Thyroid gland (tissue), 4 donors: ENCODE measurements at regions of chr1 and their contacts with region 1.

Region 1: GRCh38 chr1:167066333-167067122 is 23.6 kb downstream of the GPA33 start:
- DNase-seq: peak; percentile 66 to 76
- H3K4me3 ChIP-seq: no peak overlapping the region
- H3K27ac ChIP-seq: no peak overlapping the region
- H3K4me1 ChIP-seq: no peaks in the 10 kb centered on the region
- H3K27me3 ChIP-seq: no peaks in the 10 kb centered on the region
- CTCF ChIP-seq: peak; percentile 82 to 97 (median 91)
- POLR2A ChIP-seq: no peak

Region 2: GRCh38 chr1:167121375-167122120 is 55.0 kb after region 1 on chr1:
- intact Hi-C with region 1: no loop called
- DNase-seq: peak; percentile 42 to 52
- H3K4me3 ChIP-seq: peak overlapping the region in 2 of 3 donors; percentile 3 to 26
- H3K27ac ChIP-seq: no peak overlapping the region
- H3K4me1 ChIP-seq: peaks cover 0 to 9% of the 10 kb centered on the region in 2 donors
- H3K27me3 ChIP-seq: no peaks in the 10 kb centered on the region
- CTCF ChIP-seq: no peak
- POLR2A ChIP-seq: no peak

Region 3: DNA sequence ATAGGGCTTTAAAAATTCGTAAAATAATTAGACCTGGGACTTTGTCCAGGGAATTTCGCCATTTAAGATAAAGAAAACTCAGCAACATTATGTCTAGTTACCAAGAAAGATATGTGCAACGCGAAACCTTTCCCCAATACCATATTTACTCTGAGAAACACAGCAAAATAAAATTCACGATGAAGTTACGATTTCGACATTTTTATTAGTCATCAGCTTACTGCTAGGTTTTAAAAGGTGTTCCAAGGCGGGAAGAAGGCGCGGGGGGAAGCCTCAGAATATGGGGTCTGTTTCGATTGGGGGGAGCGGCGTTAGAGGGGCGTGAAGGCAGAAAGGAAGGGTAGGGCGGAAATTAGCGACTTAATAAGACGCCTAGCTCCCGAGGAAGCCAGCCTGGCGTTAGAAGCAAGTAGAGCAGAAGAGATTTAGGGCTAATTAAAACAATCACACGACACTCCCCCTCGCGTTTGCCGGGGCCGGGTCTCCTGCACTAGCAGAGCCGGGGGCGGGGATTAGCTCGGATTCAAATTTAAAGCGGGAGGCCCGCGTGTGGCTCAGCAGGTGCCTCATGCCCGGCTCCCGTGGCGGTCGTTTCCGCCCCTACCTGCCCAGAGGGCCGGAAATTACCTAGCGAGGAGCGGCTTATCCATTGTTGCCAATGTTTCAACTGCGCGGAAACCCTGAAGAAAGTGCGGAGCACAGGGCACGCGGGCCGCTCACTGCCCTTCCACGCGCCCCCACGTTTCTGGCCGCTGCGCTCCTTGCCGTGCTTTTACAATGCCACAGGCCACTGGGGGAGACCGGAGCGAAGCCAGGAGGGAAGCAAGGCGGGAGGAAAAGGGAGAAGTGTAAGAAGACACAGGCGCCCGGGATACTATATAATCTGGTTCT is 153.4 kb after region 1 on chr1:
- intact Hi-C with region 1: loop called (anchors 10 kb)
- DNase-seq: peak; percentile 88 to 91
- H3K4me3 ChIP-seq: peak overlapping the region; percentile 42 to 63 (median 53)
- H3K27ac ChIP-seq: peak overlapping the region; percentile 52 to 67 (median 64)
- H3K4me1 ChIP-seq: peaks cover 0 to 16% of the 10 kb centered on the region in 2 donors
- H3K27me3 ChIP-seq: no peaks in the 10 kb centered on the region
- CTCF ChIP-seq: peak in 1 of 6 experiments; percentile 22
- POLR2A ChIP-seq: peak in 1 of 2 donors; percentile 34

Region 4: DNA sequence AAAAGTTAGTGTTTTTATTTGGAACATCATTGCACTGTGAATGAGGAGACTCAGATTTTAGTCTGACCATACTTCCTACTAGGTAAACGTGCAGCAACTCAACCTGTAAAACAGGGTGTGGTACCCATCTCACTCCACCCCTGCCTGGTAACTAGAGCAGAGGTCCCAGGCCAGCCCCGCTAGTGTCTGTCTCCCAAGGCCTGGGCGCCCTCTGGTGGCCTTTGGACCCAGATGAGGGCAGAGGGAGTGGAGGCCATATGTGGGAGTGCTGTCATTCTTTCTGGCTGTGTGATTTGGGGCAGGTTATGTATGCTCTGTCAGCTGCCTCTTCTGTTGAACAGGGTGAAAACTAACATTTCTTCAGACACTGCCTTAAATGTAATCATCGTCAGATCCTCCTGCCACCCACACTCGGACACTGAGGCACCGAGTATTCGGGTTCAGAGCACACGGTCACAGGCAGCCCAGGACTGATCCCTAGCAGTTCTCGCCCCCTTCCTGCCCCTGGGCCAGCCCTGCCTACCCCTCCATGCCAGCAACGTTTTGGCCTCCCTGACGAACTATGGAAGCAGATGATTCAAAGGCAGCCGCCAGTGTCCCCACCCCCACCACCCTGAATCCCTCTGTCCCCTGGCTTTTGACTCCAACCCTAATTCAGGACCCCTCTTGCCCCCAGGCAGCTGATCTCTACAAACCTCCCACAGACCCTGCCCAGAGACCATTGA is 375.8 kb after region 1 on chr1:
- intact Hi-C with region 1: loop called (anchors 5 kb)
- DNase-seq: peak; percentile 81 to 87
- H3K4me3 ChIP-seq: no peak overlapping the region
- H3K27ac ChIP-seq: no peak overlapping the region
- H3K4me1 ChIP-seq: peaks cover 3 to 6% of the 10 kb centered on the region in 2 donors
- H3K27me3 ChIP-seq: no peaks in the 10 kb centered on the region
- CTCF ChIP-seq: peak; percentile 54 to 85 (median 76)
- POLR2A ChIP-seq: no peak

Region 5: DNA sequence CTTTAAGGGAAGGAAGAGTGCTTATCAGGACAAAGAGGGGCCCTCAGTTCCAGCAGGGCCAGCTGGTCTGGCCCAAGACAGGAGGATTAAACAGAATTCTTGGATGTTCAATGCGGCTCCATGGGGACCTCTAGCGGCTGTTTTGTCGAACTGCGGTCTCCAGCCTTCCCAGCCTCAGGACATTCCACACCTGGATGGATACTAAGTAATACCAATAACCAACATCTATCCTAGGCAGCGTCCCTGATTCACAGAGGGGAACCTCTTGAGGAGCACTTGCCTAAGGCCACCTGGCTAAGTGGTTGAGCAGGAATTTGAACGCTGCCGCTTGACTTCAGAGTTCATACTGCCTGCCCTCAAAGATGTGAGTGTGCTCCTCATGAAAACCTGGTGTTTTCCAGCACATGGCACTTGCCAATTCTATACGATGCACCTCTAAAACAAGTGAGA is 467.3 kb after region 1 on chr1:
- intact Hi-C with region 1: loop called (anchors 10 kb)
- DNase-seq: peak; percentile 77 to 82
- H3K4me3 ChIP-seq: no peak overlapping the region
- H3K27ac ChIP-seq: no peak overlapping the region
- H3K4me1 ChIP-seq: no peaks in the 10 kb centered on the region
- H3K27me3 ChIP-seq: no peaks in the 10 kb centered on the region
- CTCF ChIP-seq: peak; percentile 69 to 90 (median 82)
- POLR2A ChIP-seq: no peak

Region 6: GRCh38 chr1:167555971-167556714 is 489.6 kb after region 1 on chr1:
- intact Hi-C with region 1: loop called (anchors 5 kb)
- DNase-seq: peak; percentile 87 to 88
- H3K4me3 ChIP-seq: no peak overlapping the region
- H3K27ac ChIP-seq: peak overlapping the region in 2 of 3 donors; percentile 3 to 56
- H3K4me1 ChIP-seq: peaks cover 18 to 31% of the 10 kb centered on the region in 2 donors
- H3K27me3 ChIP-seq: no peaks in the 10 kb centered on the region
- CTCF ChIP-seq: peak; percentile 79 to 96 (median 86)
- POLR2A ChIP-seq: peak in 1 of 2 donors; percentile 25